Activated T-helper 2 cell treated with anti-CD3 and anti-CD28 coated beads, Interferon-gamma antibody, Interleukin-2, Interleukin-4, amounts not matched to agents 10 μg/mL and 5 μg/mL and 100 μg/mL, durations not matched to agents 14 hours and 24 hours and 36 hours (primary cell): ENCODE measurements at regions of chr7 and their contacts with region 1.

Region 1: DNA sequence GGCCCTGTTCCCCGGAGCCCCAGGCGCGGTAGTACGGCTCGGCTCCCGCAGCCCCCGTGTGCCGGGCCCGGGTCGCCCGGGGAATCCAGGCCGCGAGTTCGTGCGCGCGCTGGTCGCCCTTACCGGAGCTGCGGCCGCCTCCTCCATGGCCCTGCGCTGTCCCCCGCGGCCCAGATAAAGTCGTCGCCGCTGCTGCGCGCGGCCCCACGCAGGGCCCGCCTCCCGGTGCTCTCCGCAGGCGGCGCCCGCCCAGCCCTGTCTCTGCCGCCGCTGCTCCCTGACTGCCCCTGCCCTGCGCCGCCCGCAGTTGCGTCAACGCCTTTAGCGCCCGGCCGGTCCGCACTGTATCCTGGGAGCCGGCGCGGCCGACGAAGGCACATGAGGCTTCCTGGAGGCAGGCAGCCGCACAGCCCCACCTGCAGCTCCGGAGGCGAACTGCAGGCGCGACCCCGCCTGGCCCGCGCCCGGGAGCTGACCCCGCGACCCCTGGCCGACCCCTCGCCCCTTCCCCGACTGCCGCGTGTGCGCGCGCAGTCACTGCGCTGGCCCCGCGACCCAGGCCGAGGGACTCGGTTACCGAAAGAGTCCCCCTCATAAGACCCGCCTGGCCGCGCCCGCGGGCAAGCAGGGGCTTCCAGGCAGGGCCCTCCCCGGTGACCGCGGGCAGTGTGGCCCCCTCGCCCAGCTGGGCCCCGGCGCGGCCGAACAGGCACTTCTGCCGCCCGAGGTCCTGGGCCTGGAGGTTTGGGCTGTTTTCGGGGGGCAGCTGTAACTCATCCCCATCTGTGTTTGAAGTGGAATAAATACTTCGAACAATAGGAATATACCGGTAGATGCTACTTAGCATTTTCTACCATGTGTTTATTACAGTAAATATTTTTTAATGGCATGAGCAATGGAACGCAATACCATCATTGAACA is 127.1 kb upstream of the ZNF746 start:
- DNase-seq: peak; percentile 92
- H3K4me3 Mint-ChIP-seq: peak overlapping the region; percentile 87
- H3K27ac Mint-ChIP-seq: peak overlapping the region; percentile 87
- H3K4me1 Mint-ChIP-seq: peaks cover 38% of the 10 kb centered on the region
- H3K27me3 Mint-ChIP-seq: peaks cover 7% of the 10 kb centered on the region

Region 2: GRCh38 chr7:149028346-149029109 is 596.2 kb before region 1 on chr7 and contains the start of gene PDIA4:
- intact Hi-C with region 1: loop called (anchors 10 kb)
- DNase-seq: peak; percentile 100
- H3K4me3 Mint-ChIP-seq: peak within 1 kb of the TSS; percentile 98
- H3K27ac Mint-ChIP-seq: peak within 1 kb of the TSS; percentile 93
- H3K4me1 Mint-ChIP-seq: peaks cover 32% of the 10 kb centered on the region
- H3K27me3 Mint-ChIP-seq: peaks cover 2% of the 10 kb centered on the region
- total RNA-seq, gene PDIA4: 155 and 159 TPM in 2 replicates

Region 3: GRCh38 chr7:149147072-149147751 is 477.5 kb before region 1 on chr7 and contains the start of gene ZNF398:
- intact Hi-C with region 1: loop called (anchors 1 kb)
- DNase-seq: peak; percentile 74
- H3K4me3 Mint-ChIP-seq: peak within 1 kb of the TSS; percentile 90
- H3K27ac Mint-ChIP-seq: peak within 1 kb of the TSS; percentile 93
- H3K4me1 Mint-ChIP-seq: peaks cover 24% of the 10 kb centered on the region
- H3K27me3 Mint-ChIP-seq: no peaks in the 10 kb centered on the region
- total RNA-seq, gene ZNF398: 15.9 and 16.9 TPM in 2 replicates

Region 4: GRCh38 chr7:149261829-149262617 is 362.7 kb before region 1 on chr7 and contains the start of gene ZNF783:
- intact Hi-C with region 1: loop called (anchors 10 kb)
- DNase-seq: peak; percentile 84
- H3K4me3 Mint-ChIP-seq: peak within 1 kb of the TSS; percentile 82
- H3K27ac Mint-ChIP-seq: peak within 1 kb of the TSS; percentile 93
- H3K4me1 Mint-ChIP-seq: peaks cover 27% of the 10 kb centered on the region
- H3K27me3 Mint-ChIP-seq: no peaks in the 10 kb centered on the region
- total RNA-seq, gene ZNF783: 25.0 and 26.8 TPM in 2 replicates

Region 5: GRCh38 chr7:149460493-149461277 is 164.0 kb before region 1 on chr7 and contains the start of gene ZNF777:
- intact Hi-C with region 1: loop called (anchors 2 kb)
- DNase-seq: peak; percentile 80
- H3K4me3 Mint-ChIP-seq: peak within 1 kb of the TSS; percentile 84
- H3K27ac Mint-ChIP-seq: peak within 1 kb of the TSS; percentile 79
- H3K4me1 Mint-ChIP-seq: peaks cover 19% of the 10 kb centered on the region
- H3K27me3 Mint-ChIP-seq: peaks cover 10% of the 10 kb centered on the region
- total RNA-seq, gene ZNF777: 16.6 TPM in 2 replicates

Region 6: GRCh38 chr7:149598721-149599306 is 25.9 kb before region 1 on chr7:
- intact Hi-C with region 1: loop called (anchors 1 kb)
- DNase-seq: no peak
- H3K4me3 Mint-ChIP-seq: no peak overlapping the region
- H3K27ac Mint-ChIP-seq: no peak overlapping the region
- H3K4me1 Mint-ChIP-seq: peaks cover 28% of the 10 kb centered on the region
- H3K27me3 Mint-ChIP-seq: no peaks in the 10 kb centered on the region